Activated naive CD4-positive, alpha-beta T cell treated with anti-CD3 and anti-CD28 coated beads for 36 hours (primary cell): ENCODE measurements at regions of chr6 and their contacts with region 1.

Region 1: GRCh38 chr6:3118353-3119039 is at the start of gene BPHL:
- DNase-seq: peak; percentile 99
- H3K4me3 Mint-ChIP-seq: peak within 1 kb of the TSS; percentile 83
- H3K27ac Mint-ChIP-seq: peak within 1 kb of the TSS; percentile 78
- H3K4me1 Mint-ChIP-seq: peaks cover 21% of the 10 kb centered on the region
- H3K27me3 Mint-ChIP-seq: no peaks in the 10 kb centered on the region
- total RNA-seq, gene BPHL: 6.9 to 7.5 TPM

Region 2: GRCh38 chr6:2799936-2800527 is 318.5 kb before region 1 on chr6:
- CTCF ChIA-PET with region 1: no interaction called
- intact Hi-C with region 1: no loop called
- DNase-seq: no peak
- H3K4me3 Mint-ChIP-seq: no peak overlapping the region
- H3K27ac Mint-ChIP-seq: no peak overlapping the region
- H3K4me1 Mint-ChIP-seq: peaks cover 18% of the 10 kb centered on the region
- H3K27me3 Mint-ChIP-seq: no peaks in the 10 kb centered on the region

Region 3: DNA sequence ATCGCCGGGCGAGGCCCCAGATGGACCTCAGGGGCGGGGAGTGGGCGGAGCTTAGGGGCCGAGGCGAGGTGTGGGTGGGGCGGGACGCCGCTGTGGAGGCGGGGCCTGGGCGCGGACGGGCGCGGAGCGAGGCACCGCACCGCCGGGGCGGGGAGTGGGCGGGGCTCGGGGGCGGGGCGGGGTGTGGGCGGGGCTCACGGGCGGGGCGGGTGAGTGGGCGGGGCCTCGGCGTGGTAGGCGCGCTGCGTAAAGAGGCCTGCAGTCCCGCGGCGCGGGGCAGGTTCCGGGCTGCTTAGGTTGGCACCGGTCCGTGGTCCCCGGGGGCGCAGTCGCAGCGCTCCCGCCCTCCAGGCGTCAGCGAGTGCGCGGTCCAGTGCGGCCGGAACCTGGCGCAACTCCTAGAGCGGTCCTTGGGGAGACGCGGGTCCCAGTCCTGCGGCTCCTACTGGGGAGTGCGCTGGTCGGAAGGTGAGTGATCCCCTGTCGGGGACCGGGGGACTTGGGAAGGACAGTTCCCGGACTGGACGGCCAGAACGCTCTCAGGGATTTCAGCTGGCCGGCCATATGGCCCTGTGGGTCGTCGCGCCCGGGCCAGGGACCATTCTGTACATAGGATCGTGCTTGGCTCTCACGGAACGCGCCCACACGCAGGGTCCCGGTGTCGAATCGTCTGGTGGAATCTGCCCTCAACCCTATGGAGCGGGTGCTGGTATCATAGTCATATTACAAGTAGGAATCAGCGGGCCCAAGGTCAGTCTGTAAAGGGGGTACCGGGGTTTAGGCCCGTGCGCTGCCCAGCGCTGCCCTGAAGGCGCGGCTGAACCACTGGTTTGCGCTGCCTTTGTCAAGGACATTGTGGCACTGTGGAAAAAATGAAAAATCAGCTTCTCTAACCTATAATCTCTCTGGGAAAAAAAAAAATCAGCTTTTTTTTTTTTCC is 118.6 kb before region 1 on chr6 and contains the start of gene NQO2:
- CTCF ChIA-PET with region 1: no interaction called
- intact Hi-C with region 1: loop called (anchors 1 kb)
- DNase-seq: peak; percentile 91
- H3K4me3 Mint-ChIP-seq: peak within 1 kb of the TSS; percentile 82
- H3K27ac Mint-ChIP-seq: peak within 1 kb of the TSS; percentile 82
- H3K4me1 Mint-ChIP-seq: peaks cover 16% of the 10 kb centered on the region
- H3K27me3 Mint-ChIP-seq: no peaks in the 10 kb centered on the region
- total RNA-seq, gene NQO2: 18.8 to 21.1 TPM

Region 4: DNA sequence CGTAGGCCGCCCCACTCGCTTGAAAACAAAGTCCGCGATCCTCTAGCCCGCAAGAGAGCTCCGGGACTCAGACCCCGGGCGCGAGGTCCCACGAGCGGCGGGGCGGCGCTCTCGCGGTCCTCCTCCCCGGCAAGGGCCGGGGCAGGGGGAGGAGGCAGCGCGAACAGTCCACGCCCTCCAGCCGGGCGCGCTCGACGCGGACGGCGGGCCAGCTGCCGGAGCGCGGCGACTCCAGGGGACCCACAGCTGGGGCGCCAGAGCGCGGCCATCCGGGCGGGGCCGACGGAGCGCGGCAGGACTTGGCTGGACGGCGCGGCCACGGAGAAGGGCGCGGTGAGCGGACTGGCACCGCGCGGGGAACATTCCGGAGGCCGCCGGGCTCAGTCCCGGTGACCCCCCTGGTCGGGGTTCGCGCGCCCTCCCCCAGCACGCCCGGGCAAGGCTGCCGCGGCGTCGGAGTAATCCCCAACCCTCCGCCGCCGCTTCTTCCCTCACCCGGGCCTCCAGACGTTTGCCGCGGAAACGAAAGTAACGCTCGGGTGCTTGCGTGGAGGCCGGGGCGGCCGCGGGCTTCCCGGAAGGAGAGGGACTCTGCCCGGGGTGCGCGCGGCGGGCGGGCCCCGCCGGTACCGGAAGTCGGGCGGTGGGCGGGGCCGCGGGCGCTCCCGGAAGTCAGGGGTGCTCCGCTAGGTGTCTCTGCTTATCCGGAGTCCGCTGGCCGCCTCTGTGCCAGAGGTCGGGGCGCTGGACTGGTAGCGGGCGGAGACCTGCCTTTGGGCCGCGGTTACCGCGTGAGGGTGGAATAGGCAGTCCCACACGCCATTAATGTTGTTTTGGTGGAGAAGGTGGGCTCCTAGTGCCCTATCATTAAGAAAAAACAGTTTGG is 49.9 kb before region 1 on chr6 and contains the start of gene RIPK1:
- CTCF ChIA-PET with region 1: no interaction called
- intact Hi-C with region 1: loop called (anchors 1 kb)
- DNase-seq: peak; percentile 95
- H3K4me3 Mint-ChIP-seq: peak within 1 kb of the TSS; percentile 92
- H3K27ac Mint-ChIP-seq: peak within 1 kb of the TSS; percentile 97
- H3K4me1 Mint-ChIP-seq: peaks cover 49% of the 10 kb centered on the region
- H3K27me3 Mint-ChIP-seq: no peaks in the 10 kb centered on the region
- total RNA-seq, gene RIPK1: 8.8 to 10.1 TPM

Region 5: DNA sequence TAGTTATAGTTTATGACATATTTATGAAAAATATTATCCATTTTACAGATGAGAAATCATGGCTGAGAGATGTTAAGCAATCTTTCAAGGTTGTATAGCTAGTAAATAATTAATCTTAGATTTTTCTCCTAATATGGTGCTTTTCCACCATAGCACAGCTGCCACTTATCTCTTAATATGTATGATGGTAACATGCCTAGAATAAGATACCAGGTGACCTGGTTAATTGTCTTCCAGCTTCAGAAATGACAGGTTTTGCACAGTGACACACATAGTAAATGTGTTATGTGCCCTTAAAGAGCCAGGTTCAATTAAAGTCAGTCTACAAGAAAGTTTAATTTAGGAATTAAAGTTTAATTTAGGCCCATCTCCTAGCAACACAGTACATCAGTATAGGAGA is 24.0 kb after region 1 on chr6:
- CTCF ChIA-PET with region 1: no interaction called
- intact Hi-C with region 1: no loop called
- DNase-seq: no peak
- H3K4me3 Mint-ChIP-seq: no peak overlapping the region
- H3K27ac Mint-ChIP-seq: no peak overlapping the region
- H3K4me1 Mint-ChIP-seq: peaks cover 6% of the 10 kb centered on the region
- H3K27me3 Mint-ChIP-seq: no peaks in the 10 kb centered on the region

Region 6: GRCh38 chr6:3356056-3356761 is 237.7 kb after region 1 on chr6:
- CTCF ChIA-PET with region 1: no interaction called
- intact Hi-C with region 1: loop called (anchors 5 kb)
- DNase-seq: peak; percentile 68
- H3K4me3 Mint-ChIP-seq: peak overlapping the region; percentile 63
- H3K27ac Mint-ChIP-seq: peak overlapping the region; percentile 15
- H3K4me1 Mint-ChIP-seq: peaks cover 25% of the 10 kb centered on the region
- H3K27me3 Mint-ChIP-seq: no peaks in the 10 kb centered on the region

Region 7: DNA sequence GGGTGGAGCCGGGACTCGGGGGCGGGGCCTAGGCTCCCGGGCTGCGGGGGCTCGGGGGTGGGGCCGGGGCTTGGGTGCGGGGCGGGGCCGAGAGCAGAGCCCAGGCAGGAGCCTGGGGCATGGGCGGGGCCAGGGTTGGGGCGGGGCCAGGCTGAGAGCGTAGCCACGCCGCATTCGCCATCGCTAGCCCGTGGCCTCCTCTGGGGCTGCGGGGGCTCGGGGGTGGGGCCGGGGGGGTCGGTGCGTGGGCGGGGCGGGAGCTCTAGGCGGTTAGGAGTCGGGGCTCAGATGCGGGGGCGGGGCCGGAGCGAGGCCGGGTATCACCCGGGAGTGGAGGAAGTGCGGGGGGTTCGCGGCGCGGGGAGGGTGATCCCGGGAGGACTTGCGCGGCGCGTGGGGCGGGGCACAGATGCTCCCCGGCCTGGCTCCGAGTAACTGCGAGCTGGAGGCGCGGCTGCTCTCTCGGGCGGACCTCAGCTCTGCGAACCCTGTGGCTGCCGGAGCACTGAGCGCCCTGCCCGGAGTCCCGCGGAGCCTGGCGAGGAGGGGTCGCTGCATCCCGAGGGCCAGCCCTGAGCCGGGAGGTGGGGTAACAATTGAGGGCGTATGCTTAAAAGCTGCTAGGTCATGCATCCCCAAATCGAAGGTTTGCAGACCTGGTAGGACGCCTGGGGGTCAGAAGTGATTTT is 1017.3 kb after region 1 on chr6:
- CTCF ChIA-PET with region 1: no interaction called
- intact Hi-C with region 1: loop called (anchors 1 kb)
- DNase-seq: peak; percentile 92
- H3K4me3 Mint-ChIP-seq: peak overlapping the region; percentile 81
- H3K27ac Mint-ChIP-seq: peak overlapping the region; percentile 65
- H3K4me1 Mint-ChIP-seq: peaks cover 40% of the 10 kb centered on the region
- H3K27me3 Mint-ChIP-seq: no peaks in the 10 kb centered on the region